MCF 10A (cell line): ENCODE measurements at regions of chr22 and their contacts with region 1.

Region 1: DNA sequence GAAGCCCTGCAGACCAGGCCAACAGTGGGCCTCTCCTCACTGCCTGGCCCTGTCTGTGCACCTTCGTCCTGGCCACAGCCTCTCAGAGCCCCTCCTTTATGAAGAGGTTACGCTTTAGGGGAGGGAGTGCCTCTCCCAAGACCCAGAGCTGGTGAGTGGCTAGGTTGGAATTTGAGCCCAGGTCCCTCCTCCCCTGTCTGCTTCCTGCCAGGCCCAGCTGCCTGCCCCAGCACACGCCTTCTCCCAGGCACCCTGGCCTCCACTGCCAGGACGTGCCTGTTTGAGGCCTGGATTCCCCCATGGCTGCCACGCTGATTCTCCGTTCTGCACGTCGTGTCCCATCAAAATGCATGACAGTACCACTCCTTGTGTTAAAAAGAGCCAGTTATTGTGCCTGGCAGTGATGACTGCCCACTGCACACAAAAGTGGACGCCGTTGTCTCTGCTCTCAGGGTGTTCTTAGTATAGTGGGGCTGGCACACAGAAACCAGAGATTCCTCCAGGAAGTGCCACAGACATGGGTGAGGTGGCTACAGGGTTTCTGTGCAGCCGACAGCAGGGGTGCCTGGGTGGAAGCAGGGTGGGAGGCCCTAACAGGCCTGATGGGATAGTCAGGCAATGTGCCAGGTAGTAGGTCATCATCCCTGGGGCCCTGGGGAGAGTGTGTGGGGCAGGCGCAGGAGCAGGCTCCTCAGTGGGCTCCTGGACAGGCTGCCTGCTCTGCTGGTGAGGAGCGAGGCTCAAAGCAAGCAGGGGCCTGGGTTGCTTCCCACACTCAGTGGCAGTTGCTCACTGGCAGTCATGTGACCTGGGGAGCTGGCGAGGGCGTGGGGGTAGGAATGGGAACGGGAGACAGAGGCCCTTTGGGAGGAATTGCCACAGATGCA is 24.1 kb downstream of the MED15 start:
- DNase-seq: peak; percentile 95
- H3K4me3 Mint-ChIP-seq: peak overlapping the region; percentile 72
- H3K27ac Mint-ChIP-seq: peak overlapping the region; percentile 98
- H3K4me1 Mint-ChIP-seq: peaks cover 57% of the 10 kb centered on the region
- H3K27me3 Mint-ChIP-seq: no peaks in the 10 kb centered on the region
- CTCF ChIP-seq: no peak

Region 2: GRCh38 chr22:20472629-20473442 is 58.7 kb before region 1 on chr22:
- CTCF ChIA-PET with region 1: no interaction called
- POLR2A ChIA-PET with region 1: no interaction called
- intact Hi-C with region 1: no loop called
- DNase-seq: no peak
- H3K4me3 Mint-ChIP-seq: no peak overlapping the region
- H3K27ac Mint-ChIP-seq: no peak overlapping the region
- H3K4me1 Mint-ChIP-seq: no peaks in the 10 kb centered on the region
- H3K27me3 Mint-ChIP-seq: no peaks in the 10 kb centered on the region
- CTCF ChIP-seq: no peak

Region 3: GRCh38 chr22:20495861-20496681 is 35.5 kb before region 1 on chr22:
- CTCF ChIA-PET with region 1: interaction called, 3 read pairs
- POLR2A ChIA-PET with region 1: interaction called, 17 read pairs
- intact Hi-C with region 1: loop called (anchors 5 kb)
- DNase-seq: peak; percentile 88
- H3K4me3 Mint-ChIP-seq: peak overlapping the region; percentile 97
- H3K27ac Mint-ChIP-seq: peak overlapping the region; percentile 91
- H3K4me1 Mint-ChIP-seq: peaks cover 18% of the 10 kb centered on the region
- H3K27me3 Mint-ChIP-seq: no peaks in the 10 kb centered on the region
- CTCF ChIP-seq: peak; percentile 83

Region 4: GRCh38 chr22:20507253-20508066 is 24.1 kb before region 1 on chr22 and contains the start of gene MED15:
- CTCF ChIA-PET with region 1: interaction called, 6 read pairs
- POLR2A ChIA-PET with region 1: interaction called, 332 read pairs
- intact Hi-C with region 1: no loop called
- DNase-seq: peak; percentile 87
- H3K4me3 Mint-ChIP-seq: peak within 1 kb of the TSS; percentile 90
- H3K27ac Mint-ChIP-seq: peak within 1 kb of the TSS; percentile 99
- H3K4me1 Mint-ChIP-seq: peaks cover 50% of the 10 kb centered on the region
- H3K27me3 Mint-ChIP-seq: no peaks in the 10 kb centered on the region
- CTCF ChIP-seq: no peak
- total RNA-seq, gene MED15: 122 TPM in 2 replicates

Region 5: GRCh38 chr22:20514658-20515406 is 16.7 kb before region 1 on chr22:
- CTCF ChIA-PET with region 1: interaction called, 5 read pairs
- POLR2A ChIA-PET with region 1: interaction called, 332 read pairs
- intact Hi-C with region 1: loop called (anchors 2 kb)
- DNase-seq: peak; percentile 85
- H3K4me3 Mint-ChIP-seq: peak overlapping the region; percentile 52
- H3K27ac Mint-ChIP-seq: peak overlapping the region; percentile 80
- H3K4me1 Mint-ChIP-seq: peaks cover 44% of the 10 kb centered on the region
- H3K27me3 Mint-ChIP-seq: no peaks in the 10 kb centered on the region
- CTCF ChIP-seq: no peak

Region 6: GRCh38 chr22:20545681-20546521 is 14.3 kb after region 1 on chr22:
- CTCF ChIA-PET with region 1: interaction called, 4 read pairs
- POLR2A ChIA-PET with region 1: interaction called, 14 read pairs
- intact Hi-C with region 1: no loop called
- DNase-seq: no peak
- H3K4me3 Mint-ChIP-seq: no peak overlapping the region
- H3K27ac Mint-ChIP-seq: no peak overlapping the region
- H3K4me1 Mint-ChIP-seq: peaks cover 28% of the 10 kb centered on the region
- H3K27me3 Mint-ChIP-seq: no peaks in the 10 kb centered on the region
- CTCF ChIP-seq: no peak

Region 7: GRCh38 chr22:20568989-20569769 is 37.6 kb after region 1 on chr22:
- CTCF ChIA-PET with region 1: interaction called, 8 read pairs
- POLR2A ChIA-PET with region 1: interaction called, 113 read pairs
- intact Hi-C with region 1: loop called (anchors 1 kb)
- DNase-seq: peak; percentile 96
- H3K4me3 Mint-ChIP-seq: peak overlapping the region; percentile 59
- H3K27ac Mint-ChIP-seq: peak overlapping the region; percentile 94
- H3K4me1 Mint-ChIP-seq: peaks cover 37% of the 10 kb centered on the region
- H3K27me3 Mint-ChIP-seq: no peaks in the 10 kb centered on the region
- CTCF ChIP-seq: no peak

Region 8: GRCh38 chr22:20843516-20843915 is 312.0 kb after region 1 on chr22:
- CTCF ChIA-PET with region 1: no interaction called
- POLR2A ChIA-PET with region 1: no interaction called
- intact Hi-C with region 1: no loop called
- DNase-seq: no peak
- H3K4me3 Mint-ChIP-seq: no peak overlapping the region
- H3K27ac Mint-ChIP-seq: no peak overlapping the region
- H3K4me1 Mint-ChIP-seq: peaks cover 6% of the 10 kb centered on the region
- H3K27me3 Mint-ChIP-seq: no peaks in the 10 kb centered on the region
- CTCF ChIP-seq: no peak